RWPE1 (cell line): ENCODE measurements at regions of chr4 and their contacts with region 1.

Region 1: GRCh38 chr4:47836641-47837093 is 1.2 kb downstream of the CORIN start:
- DNase-seq: peak; percentile 84
- H3K27ac ChIP-seq: no peak overlapping the region
- CTCF ChIP-seq: peak; percentile 84

Region 2: DNA sequence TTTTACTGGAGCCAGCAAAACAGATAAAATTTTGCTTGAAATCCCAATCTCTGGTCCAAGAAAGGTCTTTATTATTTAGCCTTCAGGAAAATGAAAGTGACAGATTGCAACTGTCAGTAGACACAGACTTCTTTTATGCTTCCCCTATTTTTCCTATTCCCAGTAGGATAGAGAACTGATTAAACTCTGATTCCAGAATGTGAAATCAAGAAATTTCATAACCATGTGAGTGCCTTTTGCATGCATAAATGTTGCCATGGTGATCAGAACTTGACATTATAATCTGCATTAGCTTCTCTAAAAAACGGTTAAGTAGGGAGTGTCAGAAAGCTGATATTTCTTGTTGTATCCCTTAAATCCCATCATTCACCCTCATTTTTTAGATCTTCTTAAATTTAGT is 1191.5 kb before region 1 on chr4:
- CTCF ChIA-PET with region 1: interaction called, 11 read pairs
- POLR2A ChIA-PET with region 1: no interaction called
- DNase-seq: no peak
- H3K27ac ChIP-seq: no peak overlapping the region
- CTCF ChIP-seq: no peak

Region 3: GRCh38 chr4:47668810-47669408 is 167.8 kb before region 1 on chr4:
- CTCF ChIA-PET with region 1: interaction called, 11 read pairs
- POLR2A ChIA-PET with region 1: no interaction called
- DNase-seq: peak; percentile 34
- H3K27ac ChIP-seq: no peak overlapping the region
- CTCF ChIP-seq: peak; percentile 76

Region 4: GRCh38 chr4:47774079-47774478 is 62.6 kb before region 1 on chr4:
- CTCF ChIA-PET with region 1: no interaction called
- POLR2A ChIA-PET with region 1: no interaction called
- DNase-seq: no peak
- H3K27ac ChIP-seq: no peak overlapping the region
- CTCF ChIP-seq: no peak

Region 5: GRCh38 chr4:47784222-47784621 is 52.4 kb before region 1 on chr4:
- CTCF ChIA-PET with region 1: no interaction called
- POLR2A ChIA-PET with region 1: no interaction called
- DNase-seq: peak; percentile 1
- H3K27ac ChIP-seq: no peak overlapping the region
- CTCF ChIP-seq: no peak

Region 6: GRCh38 chr4:47968847-47969246 is 132.2 kb after region 1 on chr4:
- CTCF ChIA-PET with region 1: no interaction called
- POLR2A ChIA-PET with region 1: no interaction called
- DNase-seq: no peak
- H3K27ac ChIP-seq: no peak overlapping the region
- CTCF ChIP-seq: no peak